A549 (cell line): ENCODE measurements at regions of chr5 and their contacts with region 1.

Region 1: DNA sequence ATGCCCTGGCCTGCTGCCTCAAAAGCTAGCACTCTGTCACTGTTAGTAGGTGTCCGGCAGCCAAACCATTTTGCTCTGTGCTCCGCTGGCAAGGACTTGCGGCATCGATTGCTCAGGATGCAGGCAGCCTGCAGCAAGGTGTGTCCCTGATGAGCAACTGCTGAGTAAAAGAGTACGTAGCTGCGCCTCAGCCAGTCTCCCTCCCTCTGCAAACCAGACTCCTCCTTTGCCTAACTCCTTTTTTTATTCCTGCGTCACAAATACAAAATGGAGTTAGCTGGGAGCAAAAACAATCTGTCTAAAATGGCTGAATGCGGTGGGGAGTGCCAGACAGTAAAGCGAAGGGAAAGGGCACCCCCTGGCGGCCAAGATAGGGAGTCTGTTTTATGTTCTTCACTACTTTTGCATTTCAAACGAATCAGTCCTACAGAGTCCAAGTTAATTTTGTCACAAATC is 61.1 kb downstream of the DIAPH1 start:
- DNase-seq: peak; percentile 31 to 83
- ATAC-seq: peak; percentile 84 to 91
- H3K4me3 ChIP-seq: no peak overlapping the region
- H3K27ac ChIP-seq: peak overlapping the region in 1 of 2 experiments; percentile 65; a peak in 2 of 6 replicates
- H3K4me1 ChIP-seq: no peaks in the 10 kb centered on the region
- CTCF ChIP-seq: peak; percentile 78
- EP300 ChIP-seq: no peak
- POLR2A ChIP-seq: no peak
- RAD21 ChIP-seq: peak; percentile 81 to 85

Region 2: GRCh38 chr5:141223112-141223783 is 334.5 kb before region 1 on chr5 and contains the start of gene PCDHB14:
- CTCF ChIA-PET with region 1: interaction called, 13 read pairs
- POLR2A ChIA-PET with region 1: no interaction called
- DNase-seq: peak in 1 of 2 experiments; percentile 36
- ATAC-seq: peak in 1 of 2 experiments; percentile 69; a peak in 3 of 6 replicates
- H3K4me3 ChIP-seq: peak within 1 kb of the TSS; percentile 17; the same call in 1 of the 3 replicates
- H3K27ac ChIP-seq: no peak within 1 kb of the TSS
- H3K4me1 ChIP-seq: no peaks in the 10 kb centered on the region
- CTCF ChIP-seq: peak; percentile 32; the same call in 2 of the 3 replicates
- EP300 ChIP-seq: no peak
- POLR2A ChIP-seq: no peak
- RAD21 ChIP-seq: peak; percentile 49 to 55
- polyA plus RNA-seq, gene PCDHB14: 0.13 and 0.14 TPM in 2 replicates

Region 3: GRCh38 chr5:141326088-141326854 is 231.4 kb before region 1 on chr5:
- CTCF ChIA-PET with region 1: interaction called, 15 read pairs
- POLR2A ChIA-PET with region 1: no interaction called
- DNase-seq: peak in 1 of 2 experiments; percentile 51
- ATAC-seq: peak in 1 of 2 experiments; percentile 75; a peak in 3 of 6 replicates
- H3K4me3 ChIP-seq: 0 out of 3 replicates have a peak overlapping the region, but pooled peaks have one; percentile 14
- H3K27ac ChIP-seq: no peak overlapping the region
- H3K4me1 ChIP-seq: no peaks in the 10 kb centered on the region
- CTCF ChIP-seq: peak; percentile 9; the same call in 1 of the 3 replicates
- EP300 ChIP-seq: no peak
- POLR2A ChIP-seq: no peak
- RAD21 ChIP-seq: 0 out of 5 replicates have a peak, but pooled peaks of 1 of the 2 experiments have one; percentile 25

Region 4: GRCh38 chr5:141349917-141350619 is 207.6 kb before region 1 on chr5 and contains the start of gene PCDHGB1:
- CTCF ChIA-PET with region 1: interaction called, 25 read pairs
- POLR2A ChIA-PET with region 1: no interaction called
- DNase-seq: peak; percentile 80 to 87
- ATAC-seq: peak; percentile 99
- H3K4me3 ChIP-seq: peak within 1 kb of the TSS; percentile 45
- H3K27ac ChIP-seq: peak within 1 kb of the TSS; percentile 24 to 73; a peak in 5 of 6 replicates
- H3K4me1 ChIP-seq: no peaks in the 10 kb centered on the region
- CTCF ChIP-seq: peak; percentile 75
- EP300 ChIP-seq: no peak
- POLR2A ChIP-seq: peak; percentile 28
- RAD21 ChIP-seq: peak; percentile 71 to 73
- polyA plus RNA-seq, gene PCDHGB1: 3.7 and 3.9 TPM in 2 replicates

Region 5: GRCh38 chr5:141387233-141387949 is 170.3 kb before region 1 on chr5 and contains the start of gene PCDHGB4:
- CTCF ChIA-PET with region 1: interaction called, 19 read pairs
- POLR2A ChIA-PET with region 1: no interaction called
- DNase-seq: peak in 1 of 2 experiments; percentile 42
- ATAC-seq: peak; percentile 63 to 64
- H3K4me3 ChIP-seq: no peak within 1 kb of the TSS
- H3K27ac ChIP-seq: no peak within 1 kb of the TSS
- H3K4me1 ChIP-seq: no peaks in the 10 kb centered on the region
- CTCF ChIP-seq: peak; percentile 13; the same call in 1 of the 3 replicates
- EP300 ChIP-seq: no peak
- POLR2A ChIP-seq: no peak
- RAD21 ChIP-seq: peak; percentile 26 to 31; a peak in 2 of 5 replicates
- polyA plus RNA-seq, gene PCDHGB4: 1.4 and 1.5 TPM in 2 replicates

Region 6: DNA sequence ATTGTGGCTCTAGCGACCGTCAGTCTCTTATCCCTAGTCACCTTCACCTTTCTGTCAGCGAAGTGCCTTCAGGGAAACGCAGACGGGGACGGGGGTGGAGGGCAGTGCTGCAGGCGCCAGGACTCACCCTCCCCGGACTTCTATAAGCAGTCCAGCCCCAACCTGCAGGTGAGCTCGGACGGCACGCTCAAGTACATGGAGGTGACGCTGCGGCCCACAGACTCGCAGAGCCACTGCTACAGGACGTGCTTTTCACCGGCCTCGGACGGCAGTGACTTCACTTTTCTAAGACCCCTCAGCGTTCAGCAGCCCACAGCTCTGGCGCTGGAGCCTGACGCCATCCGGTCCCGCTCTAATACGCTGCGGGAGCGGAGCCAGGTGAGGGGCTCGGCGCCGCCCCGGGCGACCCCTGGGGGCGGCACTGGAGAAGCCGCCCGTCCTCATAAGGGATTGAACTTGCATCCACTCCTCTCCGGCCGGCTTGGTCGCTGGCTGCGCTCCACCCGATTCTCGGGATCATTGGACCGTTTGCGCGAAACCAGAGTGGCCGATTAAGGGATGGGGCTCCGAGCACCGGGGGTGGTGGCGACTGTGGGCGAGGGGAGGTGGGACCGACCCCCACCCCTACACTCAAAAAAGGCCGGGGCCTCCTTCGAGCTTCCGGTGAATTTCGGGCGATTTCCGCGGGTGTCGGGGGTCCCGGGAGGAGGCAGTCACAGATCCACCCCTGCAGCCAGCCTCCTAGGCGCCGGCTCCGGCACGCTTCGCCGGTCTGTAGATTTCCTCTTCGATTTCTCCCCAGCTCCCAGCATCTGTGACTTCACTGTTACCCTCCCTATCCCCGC is 66.2 kb before region 1 on chr5:
- CTCF ChIA-PET with region 1: no interaction called
- POLR2A ChIA-PET with region 1: no interaction called
- DNase-seq: no peak
- ATAC-seq: no peak
- H3K4me3 ChIP-seq: no peak overlapping the region
- H3K27ac ChIP-seq: no peak overlapping the region
- H3K4me1 ChIP-seq: no peaks in the 10 kb centered on the region
- CTCF ChIP-seq: no peak
- EP300 ChIP-seq: no peak
- POLR2A ChIP-seq: no peak
- RAD21 ChIP-seq: no peak

Region 7: DNA sequence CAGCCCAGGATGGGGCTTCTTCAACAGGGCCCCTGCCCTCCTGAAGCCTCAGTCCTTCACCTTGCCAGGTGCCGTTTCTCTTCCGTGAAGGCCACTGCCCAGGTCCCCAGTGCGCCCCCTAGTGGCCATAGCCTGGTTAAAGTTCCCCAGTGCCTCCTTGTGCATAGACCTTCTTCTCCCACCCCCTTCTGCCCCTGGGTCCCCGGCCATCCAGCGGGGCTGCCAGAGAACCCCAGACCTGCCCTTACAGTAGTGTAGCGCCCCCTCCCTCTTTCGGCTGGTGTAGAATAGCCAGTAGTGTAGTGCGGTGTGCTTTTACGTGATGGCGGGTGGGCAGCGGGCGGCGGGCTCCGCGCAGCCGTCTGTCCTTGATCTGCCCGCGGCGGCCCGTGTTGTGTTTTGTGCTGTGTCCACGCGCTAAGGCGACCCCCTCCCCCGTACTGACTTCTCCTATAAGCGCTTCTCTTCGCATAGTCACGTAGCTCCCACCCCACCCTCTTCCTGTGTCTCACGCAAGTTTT is 45.3 kb before region 1 on chr5:
- CTCF ChIA-PET with region 1: interaction called, 10 read pairs
- POLR2A ChIA-PET with region 1: no interaction called
- DNase-seq: peak; percentile 62 to 63
- ATAC-seq: peak in 1 of 2 experiments; percentile 75; a peak in 3 of 6 replicates
- H3K4me3 ChIP-seq: no peak overlapping the region
- H3K27ac ChIP-seq: no peak overlapping the region
- H3K4me1 ChIP-seq: no peaks in the 10 kb centered on the region
- CTCF ChIP-seq: peak; percentile 65
- EP300 ChIP-seq: no peak
- POLR2A ChIP-seq: no peak
- RAD21 ChIP-seq: peak; percentile 20 to 42; a peak in 3 of 5 replicates

Region 8: DNA sequence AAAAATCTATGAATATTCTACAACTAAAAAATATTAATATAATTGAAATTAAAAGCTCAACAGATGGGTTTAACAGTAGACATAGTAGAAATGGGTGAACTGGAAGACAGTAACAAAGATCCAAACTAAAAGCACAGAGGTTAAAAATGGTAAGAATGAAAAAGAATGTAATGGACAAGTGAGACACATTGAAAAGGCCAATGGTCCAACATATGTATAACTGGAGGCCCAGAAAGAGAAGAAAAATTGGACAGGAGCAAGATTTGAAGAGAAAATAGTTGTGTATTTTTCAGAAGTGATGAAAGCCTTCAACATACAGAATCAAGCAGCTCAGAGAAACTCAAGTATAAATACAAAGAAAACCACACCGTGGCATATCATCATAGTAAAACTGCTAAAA is 10.2 kb before region 1 on chr5:
- CTCF ChIA-PET with region 1: interaction called, 12 read pairs
- POLR2A ChIA-PET with region 1: no interaction called
- DNase-seq: peak in 1 of 2 experiments; percentile 67
- ATAC-seq: no peak
- H3K4me3 ChIP-seq: no peak overlapping the region
- H3K27ac ChIP-seq: no peak overlapping the region
- H3K4me1 ChIP-seq: no peaks in the 10 kb centered on the region
- CTCF ChIP-seq: no peak
- EP300 ChIP-seq: no peak
- POLR2A ChIP-seq: no peak
- RAD21 ChIP-seq: no peak

Region 9: GRCh38 chr5:141628175-141628788 is 70.6 kb after region 1 on chr5:
- CTCF ChIA-PET with region 1: no interaction called
- POLR2A ChIA-PET with region 1: no interaction called
- DNase-seq: no peak
- ATAC-seq: no peak
- H3K4me3 ChIP-seq: no peak overlapping the region
- H3K27ac ChIP-seq: no peak overlapping the region
- H3K4me1 ChIP-seq: no peaks in the 10 kb centered on the region
- CTCF ChIP-seq: no peak
- EP300 ChIP-seq: no peak
- POLR2A ChIP-seq: no peak
- RAD21 ChIP-seq: no peak

Region 10: GRCh38 chr5:141641634-141642267 is 84.0 kb after region 1 on chr5:
- CTCF ChIA-PET with region 1: no interaction called
- POLR2A ChIA-PET with region 1: no interaction called
- DNase-seq: peak; percentile 71 to 89
- ATAC-seq: peak; percentile 28 to 54; a peak in 3 of 6 replicates
- H3K4me3 ChIP-seq: no peak overlapping the region
- H3K27ac ChIP-seq: no peak overlapping the region
- H3K4me1 ChIP-seq: peaks cover 13% of the 10 kb centered on the region; the same call in 2 of the 3 replicates
- CTCF ChIP-seq: peak; percentile 32; the same call in 2 of the 3 replicates
- EP300 ChIP-seq: no peak
- POLR2A ChIP-seq: no peak
- RAD21 ChIP-seq: peak; percentile 11 to 15; a peak in 1 of 5 replicates